BJ (cell line): ENCODE measurements at regions of chr1 and their contacts with region 1.

Region 1: DNA sequence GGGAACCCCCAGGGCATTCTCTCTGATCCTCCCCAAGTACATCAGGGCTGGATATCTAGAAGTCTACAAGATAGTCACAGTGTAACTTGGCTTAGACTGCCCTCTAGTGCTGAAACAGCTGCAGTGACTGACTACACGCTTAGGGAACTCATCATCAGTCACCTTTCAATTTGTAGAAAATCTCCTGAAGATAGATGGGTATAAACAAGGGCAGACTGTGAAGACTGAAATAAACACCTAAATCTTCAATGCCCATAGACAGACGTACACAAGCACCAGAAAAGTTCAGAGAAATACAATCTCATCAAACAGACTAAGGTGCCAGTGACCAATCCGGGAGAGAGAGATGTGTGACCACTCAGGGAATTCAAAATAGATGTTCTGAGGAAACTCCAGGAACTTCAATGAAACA is 46.6 kb downstream of the PACC1 start:
- DNase-seq: peak; percentile 17
- H3K4me3 ChIP-seq: no peak overlapping the region
- H3K27me3 ChIP-seq: no peaks in the 10 kb centered on the region
- CTCF ChIP-seq: peak; percentile 93

Region 2: DNA sequence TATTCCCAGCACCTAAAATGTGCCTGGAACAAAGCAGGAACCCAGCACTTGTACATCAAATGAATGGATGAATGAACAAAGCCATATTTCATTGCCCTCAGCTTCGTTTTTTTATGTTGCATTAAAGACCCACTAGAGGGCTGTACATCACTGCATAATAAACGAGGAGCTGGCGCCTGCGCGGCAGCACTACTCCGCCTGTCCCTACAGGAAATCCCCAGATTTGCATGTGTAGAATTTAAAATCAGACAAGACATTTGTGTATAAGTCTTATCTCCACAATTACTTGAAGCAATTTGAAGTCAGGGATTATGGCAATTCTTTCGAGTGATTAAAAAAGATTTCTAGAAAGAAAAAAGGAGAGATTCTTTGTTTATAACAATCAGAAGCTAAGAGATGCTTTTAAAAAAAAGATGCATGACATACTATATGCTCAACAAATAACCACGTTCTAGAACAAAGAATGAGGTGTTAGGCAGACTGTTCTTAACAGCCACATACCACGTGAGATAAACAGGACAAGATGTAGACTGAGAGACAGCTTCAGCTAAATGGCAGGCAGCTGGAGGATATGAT is 687.2 kb before region 1 on chr1:
- CTCF ChIA-PET with region 1: interaction called, 12 read pairs
- POLR2A ChIA-PET with region 1: no interaction called
- DNase-seq: peak; percentile 52
- H3K4me3 ChIP-seq: no peak overlapping the region
- H3K27me3 ChIP-seq: no peaks in the 10 kb centered on the region
- CTCF ChIP-seq: peak; percentile 70

Region 3: DNA sequence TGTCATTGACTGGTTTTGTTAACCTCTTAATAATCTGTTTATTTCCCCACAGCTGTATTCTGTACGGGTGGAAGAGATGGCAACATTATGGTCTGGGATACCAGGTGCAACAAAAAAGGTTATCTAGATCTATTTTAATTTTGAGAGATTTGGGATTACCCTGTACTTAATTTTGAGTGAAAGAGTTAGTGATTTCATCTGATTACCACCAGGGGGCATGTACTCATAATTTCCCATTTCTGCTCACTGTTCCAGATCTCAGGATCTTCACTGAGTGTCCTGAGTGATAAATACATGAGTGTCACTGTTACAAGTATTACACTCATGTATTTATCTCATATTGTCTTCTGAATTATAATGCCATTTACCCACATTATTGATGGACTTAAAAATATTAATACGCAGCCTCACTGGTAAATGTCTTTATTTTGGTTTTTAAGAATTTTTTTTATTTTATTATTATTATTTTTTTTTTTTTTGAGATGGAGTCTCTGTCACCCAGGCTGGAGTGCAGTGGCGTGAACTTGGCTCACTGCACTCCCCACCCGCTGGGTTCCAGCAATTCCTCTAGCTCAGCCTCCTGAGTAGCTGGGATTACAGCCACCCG is 305.1 kb before region 1 on chr1:
- CTCF ChIA-PET with region 1: interaction called, 45 read pairs
- POLR2A ChIA-PET with region 1: no interaction called
- DNase-seq: no peak
- H3K4me3 ChIP-seq: no peak overlapping the region
- H3K27me3 ChIP-seq: no peaks in the 10 kb centered on the region
- CTCF ChIP-seq: peak; percentile 59

Region 4: GRCh38 chr1:212077051-212077450 is 291.0 kb before region 1 on chr1:
- CTCF ChIA-PET with region 1: interaction called, 100 read pairs
- POLR2A ChIA-PET with region 1: no interaction called
- DNase-seq: no peak
- H3K4me3 ChIP-seq: no peak overlapping the region
- H3K27me3 ChIP-seq: no peaks in the 10 kb centered on the region
- CTCF ChIP-seq: no peak

Region 5: GRCh38 chr1:212089560-212090163 is 278.4 kb before region 1 on chr1:
- CTCF ChIA-PET with region 1: interaction called, 15 read pairs
- POLR2A ChIA-PET with region 1: no interaction called
- DNase-seq: no peak
- H3K4me3 ChIP-seq: no peak overlapping the region
- H3K27me3 ChIP-seq: no peaks in the 10 kb centered on the region
- CTCF ChIP-seq: no peak

Region 6: GRCh38 chr1:212353181-212353580 is 14.9 kb before region 1 on chr1:
- CTCF ChIA-PET with region 1: interaction called, 10 read pairs
- POLR2A ChIA-PET with region 1: no interaction called
- DNase-seq: no peak
- H3K4me3 ChIP-seq: no peak overlapping the region
- H3K27me3 ChIP-seq: no peaks in the 10 kb centered on the region
- CTCF ChIP-seq: no peak

Region 7: GRCh38 chr1:212455803-212456528 is 87.9 kb after region 1 on chr1:
- CTCF ChIA-PET with region 1: interaction called, 43 read pairs
- POLR2A ChIA-PET with region 1: no interaction called
- DNase-seq: peak; percentile 15
- H3K4me3 ChIP-seq: no peak overlapping the region
- H3K27me3 ChIP-seq: no peaks in the 10 kb centered on the region; the same call in 1 of the 2 replicates
- CTCF ChIP-seq: peak; percentile 97

Region 8: GRCh38 chr1:212539737-212540430 is 171.8 kb after region 1 on chr1:
- CTCF ChIA-PET with region 1: no interaction called
- POLR2A ChIA-PET with region 1: no interaction called
- DNase-seq: no peak
- H3K4me3 ChIP-seq: no peak overlapping the region
- H3K27me3 ChIP-seq: peaks cover 9% of the 10 kb centered on the region
- CTCF ChIP-seq: no peak